ENCODE measurements at regions of chr22 and their contacts with region 1.

Region 1: GRCh38 chr22:19730655-19731360 is 7.5 kb downstream of the GP1BB start:
- DNase-seq: peak; percentile 63 to 95 (median 88)

Region 2: GRCh38 chr22:19854778-19855503 is 124.1 kb after region 1 on chr22 and contains the starts of genes GNB1L and RTL10:
- intact Hi-C with region 1: loop called (anchors 5 kb)
- DNase-seq: peak; percentile 86 to 98 (median 95)

Region 3: GRCh38 chr22:19909350-19910179 is 178.8 kb after region 1 on chr22:
- intact Hi-C with region 1: loop called (anchors 2 kb)
- DNase-seq: peak; percentile 64 to 95 (median 87)

Measured in head of caudate nucleus (tissue), 42 donors.